ENCODE measurements at regions of chr4 and their contacts with region 1.

Region 1: GRCh38 chr4:112321776-112322684 is 24.9 kb downstream of the ALPK1 start:
- DNase-seq: no peak
- H3K4me3 ChIP-seq: no peak overlapping the region
- H3K27ac ChIP-seq: no peak overlapping the region
- H3K27me3 ChIP-seq: no peaks in the 10 kb centered on the region
- CTCF ChIP-seq: peak; percentile 89

Region 2: GRCh38 chr4:112189754-112190153 is 132.3 kb before region 1 on chr4:
- CTCF ChIA-PET with region 1: no interaction called
- POLR2A ChIA-PET with region 1: no interaction called
- DNase-seq: no peak
- H3K4me3 ChIP-seq: no peak overlapping the region
- H3K27ac ChIP-seq: peak overlapping the region; percentile 21
- H3K27me3 ChIP-seq: no peaks in the 10 kb centered on the region
- CTCF ChIP-seq: peak; percentile 32

Region 3: DNA sequence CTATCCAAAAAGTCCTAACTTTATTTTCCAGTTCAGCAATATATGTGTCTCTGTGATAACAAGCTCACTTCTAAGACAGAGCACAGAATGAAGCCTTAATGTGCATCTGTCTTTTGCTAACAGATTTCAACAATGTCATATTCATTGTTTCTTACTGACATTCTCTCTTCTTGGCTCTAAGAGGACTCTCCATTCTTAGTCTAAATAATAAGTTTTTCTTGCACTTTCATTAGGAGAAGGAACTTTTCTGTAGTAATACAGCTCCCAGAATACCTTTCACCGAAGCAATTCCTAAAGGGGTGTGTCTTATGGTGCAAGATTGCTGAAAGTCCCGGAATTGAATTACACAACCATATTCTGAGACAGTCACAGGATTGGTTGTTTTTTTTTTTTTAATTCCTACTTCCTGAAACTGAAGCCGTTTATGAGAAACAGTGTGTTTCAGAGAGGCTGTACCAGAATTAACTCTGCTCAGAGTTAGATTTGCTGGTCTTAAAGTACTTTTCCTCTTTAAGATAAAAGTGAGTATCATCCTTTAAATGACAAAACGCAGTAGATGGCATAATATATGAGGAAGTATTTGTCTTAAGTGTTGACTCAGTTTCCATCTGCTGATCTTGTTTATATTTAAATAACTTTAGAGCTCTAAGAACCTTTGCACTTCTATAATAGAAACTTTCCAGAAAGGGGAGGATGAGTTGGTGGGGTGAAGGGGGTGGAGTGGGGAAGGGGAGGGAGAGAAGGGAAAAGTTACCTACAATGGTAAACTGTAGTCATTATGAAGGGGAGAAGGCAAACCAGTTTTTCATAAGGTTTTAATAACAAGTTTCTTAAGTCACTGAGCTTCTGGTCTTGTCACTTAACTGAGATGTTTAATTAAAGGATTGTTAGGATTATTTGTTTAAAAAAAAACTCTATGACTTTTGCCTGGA is 24.8 kb before region 1 on chr4 and contains the start of gene ALPK1:
- CTCF ChIA-PET with region 1: interaction called, 14 read pairs
- POLR2A ChIA-PET with region 1: no interaction called
- DNase-seq: peak; percentile 80
- H3K4me3 ChIP-seq: peak within 1 kb of the TSS; percentile 52
- H3K27ac ChIP-seq: no peak within 1 kb of the TSS
- H3K27me3 ChIP-seq: no peaks in the 10 kb centered on the region
- CTCF ChIP-seq: no peak
- polyA plus RNA-seq, gene ALPK1: 11.5 and 14.0 TPM in 2 replicates